HCT116 (cell line): ENCODE measurements at regions of chr3 and their contacts with region 1.

Region 1: GRCh38 chr3:75180235-75180944 is 483.7 kb upstream of the FRG2C start:
- DNase-seq: no peak
- ATAC-seq: no peak
- H3K4me3 ChIP-seq: no peak overlapping the region
- H3K27ac ChIP-seq: no peak overlapping the region
- H3K4me1 ChIP-seq: no peaks in the 10 kb centered on the region
- H3K27me3 ChIP-seq: no peaks in the 10 kb centered on the region
- CTCF ChIP-seq: no peak
- POLR2A ChIP-seq: no peak
- RAD21 ChIP-seq: no peak

Region 2: DNA sequence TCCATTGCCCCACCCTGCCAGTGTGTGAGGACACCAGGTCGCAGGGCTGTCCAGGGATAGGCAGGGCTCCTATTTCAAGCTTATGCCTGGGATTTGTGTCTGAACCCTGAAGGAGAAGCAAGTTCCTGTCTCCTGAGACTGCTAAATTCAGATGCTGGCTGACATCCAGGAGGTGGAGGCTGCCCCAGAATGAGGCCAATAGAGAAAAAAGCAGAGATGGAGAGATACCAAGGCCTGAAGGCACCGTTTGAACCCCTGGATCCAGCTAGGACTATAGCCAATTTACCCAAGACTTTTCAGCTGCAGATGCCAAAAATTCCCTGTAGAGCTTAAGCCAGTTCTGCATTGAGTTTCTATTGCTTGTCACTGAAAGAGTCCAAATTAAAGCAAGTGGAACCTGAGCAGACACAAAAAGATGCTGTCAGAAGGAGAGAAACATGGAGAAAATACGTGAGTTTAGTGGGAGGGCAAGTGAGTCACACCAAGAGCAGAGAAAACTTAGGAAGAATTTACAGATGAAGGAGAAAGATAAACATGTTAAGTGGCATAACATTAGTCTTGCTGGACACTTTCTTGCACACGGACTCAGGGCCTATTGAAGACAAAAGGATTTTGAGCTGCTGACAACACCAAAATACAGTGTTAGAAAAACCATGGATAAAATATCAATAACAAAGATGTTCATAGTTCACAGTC is 714.5 kb before region 1 on chr3:
- CTCF ChIA-PET with region 1: no interaction called
- POLR2A ChIA-PET with region 1: no interaction called
- RAD21 ChIA-PET with region 1: no interaction called
- intact Hi-C with region 1: no loop called
- DNase-seq: no peak
- ATAC-seq: no peak
- H3K4me3 ChIP-seq: no peak overlapping the region
- H3K27ac ChIP-seq: no peak overlapping the region
- H3K4me1 ChIP-seq: no peaks in the 10 kb centered on the region
- H3K27me3 ChIP-seq: no peaks in the 10 kb centered on the region
- CTCF ChIP-seq: no peak
- POLR2A ChIP-seq: no peak
- RAD21 ChIP-seq: no peak

Region 3: GRCh38 chr3:75059120-75059519 is 121.3 kb before region 1 on chr3:
- CTCF ChIA-PET with region 1: no interaction called
- POLR2A ChIA-PET with region 1: no interaction called
- RAD21 ChIA-PET with region 1: no interaction called
- intact Hi-C with region 1: no loop called
- DNase-seq: no peak
- ATAC-seq: no peak
- H3K4me3 ChIP-seq: no peak overlapping the region
- H3K27ac ChIP-seq: no peak overlapping the region
- H3K4me1 ChIP-seq: no peaks in the 10 kb centered on the region
- H3K27me3 ChIP-seq: no peaks in the 10 kb centered on the region
- CTCF ChIP-seq: no peak
- POLR2A ChIP-seq: no peak
- RAD21 ChIP-seq: no peak

Region 4: GRCh38 chr3:75248974-75249373 is 68.6 kb after region 1 on chr3:
- CTCF ChIA-PET with region 1: no interaction called
- POLR2A ChIA-PET with region 1: no interaction called
- RAD21 ChIA-PET with region 1: no interaction called
- intact Hi-C with region 1: loop called (anchors 10 kb)
- DNase-seq: no peak
- ATAC-seq: no peak
- H3K4me3 ChIP-seq: no peak overlapping the region
- H3K27ac ChIP-seq: no peak overlapping the region
- H3K4me1 ChIP-seq: no peaks in the 10 kb centered on the region
- H3K27me3 ChIP-seq: no peaks in the 10 kb centered on the region; the same call in 1 of the 2 replicates
- CTCF ChIP-seq: no peak
- POLR2A ChIP-seq: no peak
- RAD21 ChIP-seq: no peak